Testis (tissue), 5 donors: ENCODE measurements at regions of chr19 and their contacts with region 1.

Region 1: GRCh38 chr19:51079481-51080110 is 3.1 kb downstream of the KLK14 start:
- DNase-seq: no peak
- H3K4me3 ChIP-seq: no peak overlapping the region
- H3K27ac ChIP-seq: no peak overlapping the region
- H3K4me1 ChIP-seq: no peaks in the 10 kb centered on the region
- H3K27me3 ChIP-seq: no peaks in the 10 kb centered on the region
- CTCF ChIP-seq: no peak
- POLR2A ChIP-seq: no peak

Region 2: GRCh38 chr19:51020988-51021651 is 58.5 kb before region 1 on chr19:
- intact Hi-C with region 1: loop called (anchors 10 kb)
- DNase-seq: peak; percentile 79
- H3K4me3 ChIP-seq: no peak overlapping the region
- H3K27ac ChIP-seq: peak overlapping the region; percentile 60 to 85
- H3K4me1 ChIP-seq: peaks cover 30% of the 10 kb centered on the region
- H3K27me3 ChIP-seq: no peaks in the 10 kb centered on the region
- CTCF ChIP-seq: peak; percentile 65 to 86 (median 72)
- POLR2A ChIP-seq: no peak

Region 3: DNA sequence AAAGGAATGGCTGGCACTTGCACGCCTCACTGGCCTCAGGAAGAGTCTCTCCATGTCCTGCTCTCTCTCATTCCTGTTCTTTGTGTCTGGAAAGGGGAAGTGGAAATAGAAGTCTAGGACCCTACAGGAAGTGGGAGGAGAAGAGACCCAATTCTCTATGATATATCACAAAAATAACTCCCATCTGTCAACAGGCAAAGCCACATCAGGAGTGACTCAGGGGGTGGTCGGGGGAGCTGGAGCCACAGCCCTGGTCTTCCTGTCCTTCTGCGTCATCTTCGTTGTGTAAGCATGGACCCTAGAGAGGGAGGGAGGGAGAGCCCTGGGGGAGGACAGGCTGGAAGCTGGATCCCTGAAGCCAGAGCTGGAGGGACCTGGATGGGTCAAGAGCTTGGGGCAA is 48.2 kb after region 1 on chr19:
- intact Hi-C with region 1: no loop called
- DNase-seq: no peak
- H3K4me3 ChIP-seq: no peak overlapping the region
- H3K27ac ChIP-seq: peak overlapping the region in 1 of 2 donors; percentile 69
- H3K4me1 ChIP-seq: peaks cover 58% of the 10 kb centered on the region
- H3K27me3 ChIP-seq: no peaks in the 10 kb centered on the region
- CTCF ChIP-seq: no peak
- POLR2A ChIP-seq: no peak